ENCODE measurements at regions of chr6 and their contacts with region 1.

Region 1: DNA sequence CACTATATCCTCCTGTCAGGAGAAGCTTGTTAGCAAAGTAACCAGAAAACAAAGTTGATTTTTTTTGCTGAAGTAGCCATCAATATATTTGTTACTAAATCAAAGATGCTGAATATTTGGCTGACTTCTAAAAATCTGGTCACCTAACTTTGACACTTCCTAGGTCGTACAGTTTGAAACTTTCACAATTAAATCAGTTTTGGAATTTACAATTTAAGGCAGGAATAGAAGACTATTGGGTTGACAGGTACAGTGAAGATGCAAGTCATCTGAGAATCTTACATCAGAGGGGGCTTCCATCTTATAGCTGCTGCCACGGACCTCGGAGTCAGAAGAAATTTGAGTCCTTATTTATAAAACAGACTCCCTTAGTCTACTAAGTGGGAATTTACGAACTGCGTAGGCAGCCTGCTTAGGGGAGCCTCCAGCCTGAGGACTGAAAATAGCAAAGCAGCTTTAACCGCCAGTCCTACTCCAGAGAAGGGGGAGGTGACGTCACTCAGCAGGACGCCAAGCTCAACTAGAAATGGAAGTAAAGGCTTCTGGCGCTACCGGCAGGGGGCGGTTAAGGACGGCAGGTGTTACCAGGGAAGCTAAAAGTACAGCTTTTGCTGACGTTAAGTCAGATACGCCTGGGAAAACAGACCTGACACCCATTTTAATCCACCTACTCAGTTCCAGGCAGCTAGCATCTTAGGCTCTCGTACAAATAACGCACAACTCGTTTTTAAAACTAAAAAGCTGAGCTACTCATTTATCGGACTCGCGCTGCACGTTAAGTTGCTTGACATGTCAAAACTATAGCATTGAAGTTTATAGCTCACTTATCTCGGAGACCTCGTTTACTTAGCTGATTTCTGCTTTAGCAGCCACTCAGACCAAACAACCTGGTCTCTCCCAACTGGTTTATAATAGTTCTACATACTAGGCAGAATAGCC is 61.1 kb upstream of the HFE start:
- DNase-seq: peak; percentile 90 to 96
- ATAC-seq: peak; percentile 65 to 83 (median 74)
- H3K4me3 ChIP-seq: peak overlapping the region; percentile 51 to 79 (median 68)
- H3K27ac ChIP-seq: peak overlapping the region; percentile 86 to 96 (median 91)
- H3K4me1 ChIP-seq: peaks cover 0 to 52% (median 10%) of the 10 kb centered on the region in 9 donors
- H3K27me3 ChIP-seq: no peaks in the 10 kb centered on the region
- CTCF ChIP-seq: peak; percentile 48 to 93 (median 83)

Region 2: GRCh38 chr6:25774120-25774715 is 251.9 kb before region 1 on chr6:
- intact Hi-C with region 1: no loop called
- DNase-seq: no peak
- ATAC-seq: no peak
- H3K4me3 ChIP-seq: no peak overlapping the region
- H3K27ac ChIP-seq: no peak overlapping the region
- H3K4me1 ChIP-seq: no peaks in the 10 kb centered on the region
- H3K27me3 ChIP-seq: peaks cover 0 to 15% (median 3%) of the 10 kb centered on the region in 7 donors
- CTCF ChIP-seq: no peak

Region 3: GRCh38 chr6:26045065-26045927 is 19.1 kb after region 1 on chr6:
- intact Hi-C with region 1: loop called in 1 of 10 experiments (anchors 2 kb)
- DNase-seq: peak; percentile 31 to 94
- ATAC-seq: peak; percentile 66 to 89 (median 81)
- H3K4me3 ChIP-seq: peak overlapping the region; percentile 7 to 67 (median 60)
- H3K27ac ChIP-seq: peak overlapping the region; percentile 84 to 95 (median 90)
- H3K4me1 ChIP-seq: peaks cover 4 to 27% (median 14%) of the 10 kb centered on the region in 9 donors
- H3K27me3 ChIP-seq: no peaks in the 10 kb centered on the region
- CTCF ChIP-seq: peak in 1 of 9 donors; percentile 8

Region 4: GRCh38 chr6:26196846-26197648 is 170.9 kb after region 1 on chr6:
- intact Hi-C with region 1: loop called in 3 of 10 experiments (anchors 5 to 10 kb)
- DNase-seq: peak; percentile 51 to 83
- ATAC-seq: peak; percentile 52 to 68 (median 62)
- H3K4me3 ChIP-seq: peak overlapping the region; percentile 37 to 75 (median 65)
- H3K27ac ChIP-seq: peak overlapping the region in 9 of 10 donors; percentile 57 to 90 (median 81)
- H3K4me1 ChIP-seq: peaks cover 0 to 52% (median 28%) of the 10 kb centered on the region in 9 donors
- H3K27me3 ChIP-seq: peaks cover 0 to 40% (median 0%) of the 10 kb centered on the region in 7 donors
- CTCF ChIP-seq: peak in 1 of 9 donors; percentile 0

Region 5: GRCh38 chr6:27146706-27147505 is 1120.7 kb after region 1 on chr6:
- intact Hi-C with region 1: loop called in 3 of 10 experiments (anchors 10 kb)
- DNase-seq: peak; percentile 62 to 86
- ATAC-seq: peak; percentile 92 to 98 (median 96)
- H3K4me3 ChIP-seq: peak overlapping the region; percentile 45 to 79 (median 66)
- H3K27ac ChIP-seq: peak overlapping the region; percentile 81 to 93 (median 89)
- H3K4me1 ChIP-seq: peaks cover 0 to 33% (median 15%) of the 10 kb centered on the region in 9 donors
- H3K27me3 ChIP-seq: no peaks in the 10 kb centered on the region
- CTCF ChIP-seq: no peak

Measured in heart right ventricle (tissue), 16 donors.